Vagina (tissue), 2 donors: ENCODE measurements at regions of chr15 and their contacts with region 1.

Region 1: GRCh38 chr15:66707310-66708082 is 5.5 kb downstream of the SMAD6 start:
- DNase-seq: no peak
- H3K4me3 ChIP-seq: peak overlapping the region; percentile 2 to 14
- H3K27ac ChIP-seq: peak overlapping the region; percentile 65
- H3K4me1 ChIP-seq: peaks cover 56% of the 10 kb centered on the region
- H3K27me3 ChIP-seq: no peaks in the 10 kb centered on the region
- CTCF ChIP-seq: no peak
- POLR2A ChIP-seq: no peak

Region 2: DNA sequence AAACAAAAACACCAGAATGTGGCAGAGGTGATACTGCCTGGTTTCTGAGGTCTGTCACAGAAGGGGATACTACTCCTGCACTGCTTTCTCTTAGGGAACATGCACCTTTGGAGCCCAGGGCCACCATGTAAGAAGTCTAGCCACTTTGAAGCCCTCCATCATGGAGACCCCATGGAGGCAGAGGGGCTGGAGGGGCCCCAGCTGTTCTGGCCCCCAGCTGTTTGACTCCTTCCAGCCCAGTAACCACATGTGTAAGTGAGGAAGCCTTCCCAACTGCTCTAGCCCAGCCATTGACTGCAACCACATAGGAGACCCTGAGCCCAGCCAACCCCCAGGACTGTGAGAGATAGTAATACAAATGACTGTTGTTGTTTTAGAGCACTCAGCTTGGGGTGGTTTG is 1275.8 kb before region 1 on chr15:
- intact Hi-C with region 1: no loop called
- DNase-seq: peak in 1 of 2 donors; percentile 40
- H3K4me3 ChIP-seq: no peak overlapping the region
- H3K27ac ChIP-seq: no peak overlapping the region
- H3K4me1 ChIP-seq: peaks cover 7% of the 10 kb centered on the region
- H3K27me3 ChIP-seq: no peaks in the 10 kb centered on the region
- CTCF ChIP-seq: no peak
- POLR2A ChIP-seq: no peak

Region 3: DNA sequence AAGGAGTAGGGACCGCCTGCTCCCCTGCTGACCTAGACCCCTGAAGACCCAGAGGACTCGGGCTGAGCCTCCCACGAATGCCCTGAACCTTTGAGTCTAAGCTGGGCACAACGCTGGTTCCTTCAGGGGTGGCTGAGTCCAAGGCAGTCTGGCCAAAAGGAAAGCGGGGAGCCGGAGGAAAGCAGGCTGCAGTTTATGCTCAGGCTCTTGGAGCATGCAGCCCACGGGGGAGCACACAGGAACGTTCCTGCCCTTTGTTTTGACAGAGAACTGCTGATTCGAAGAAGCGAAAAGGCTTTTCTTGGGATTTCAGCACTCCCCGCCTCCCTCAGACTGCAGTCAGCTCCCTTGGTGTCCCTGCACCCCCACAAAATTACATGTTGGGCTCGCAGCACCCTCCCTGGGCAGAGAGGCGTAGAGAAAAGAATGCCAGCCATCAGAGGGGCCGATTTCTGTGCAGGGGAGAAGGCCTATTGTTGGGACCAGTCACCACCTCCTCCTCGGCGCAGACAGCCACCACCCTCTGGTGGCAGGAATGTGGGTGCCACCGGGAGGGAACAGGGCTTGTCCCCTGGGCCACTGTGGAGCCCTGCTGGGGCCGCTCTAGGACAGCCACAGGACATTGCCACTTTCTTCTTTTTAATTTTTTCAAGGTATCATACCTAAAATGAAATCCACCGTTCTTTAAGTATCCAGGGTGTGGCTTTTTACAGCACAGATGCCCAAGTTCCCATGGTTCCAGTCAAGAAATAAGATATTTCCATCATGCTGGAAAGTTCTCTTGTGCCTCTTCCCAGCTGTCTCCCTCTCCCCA is 66.7 kb after region 1 on chr15:
- intact Hi-C with region 1: loop called (anchors 5 kb)
- DNase-seq: no peak
- H3K4me3 ChIP-seq: no peak overlapping the region
- H3K27ac ChIP-seq: peak overlapping the region; percentile 51
- H3K4me1 ChIP-seq: peaks cover 40% of the 10 kb centered on the region
- H3K27me3 ChIP-seq: no peaks in the 10 kb centered on the region
- CTCF ChIP-seq: peak; percentile 89 to 99 (median 91)
- POLR2A ChIP-seq: no peak